Activated CD4-positive, alpha-beta memory T cell treated with anti-CD3 and anti-CD28 coated beads, Interleukin-2, amount 10 ng/mL, durations not matched to agents 7 days and 5 days (primary cell): ENCODE measurements at regions of chr17 and their contacts with region 1.

Region 1: GRCh38 chr17:34361478-34362061 is 1.5 kb downstream of the CCL1 start:
- DNase-seq: peak; percentile 80
- H3K4me3 Mint-ChIP-seq: no peak overlapping the region
- H3K27ac Mint-ChIP-seq: no peak overlapping the region
- H3K4me1 Mint-ChIP-seq: peaks cover 33% of the 10 kb centered on the region
- H3K27me3 Mint-ChIP-seq: peaks cover 52% of the 10 kb centered on the region

Region 2: GRCh38 chr17:34171245-34171818 is 190.2 kb before region 1 on chr17:
- CTCF ChIA-PET with region 1: interaction called, 41 read pairs
- POLR2A ChIA-PET with region 1: interaction called, 3 read pairs
- DNase-seq: peak; percentile 67
- H3K4me3 Mint-ChIP-seq: no peak overlapping the region
- H3K27ac Mint-ChIP-seq: no peak overlapping the region
- H3K4me1 Mint-ChIP-seq: no peaks in the 10 kb centered on the region
- H3K27me3 Mint-ChIP-seq: peaks cover 3% of the 10 kb centered on the region

Region 3: GRCh38 chr17:34321964-34322363 is 39.6 kb before region 1 on chr17:
- CTCF ChIA-PET with region 1: interaction called, 16 read pairs
- POLR2A ChIA-PET with region 1: no interaction called
- DNase-seq: no peak
- H3K4me3 Mint-ChIP-seq: no peak overlapping the region
- H3K27ac Mint-ChIP-seq: no peak overlapping the region
- H3K4me1 Mint-ChIP-seq: no peaks in the 10 kb centered on the region
- H3K27me3 Mint-ChIP-seq: peaks cover 29% of the 10 kb centered on the region

Region 4: GRCh38 chr17:34378664-34379101 is 17.1 kb after region 1 on chr17:
- CTCF ChIA-PET with region 1: interaction called, 64 read pairs
- POLR2A ChIA-PET with region 1: interaction called, 3 read pairs
- DNase-seq: peak; percentile 50
- H3K4me3 Mint-ChIP-seq: peak overlapping the region; percentile 44
- H3K27ac Mint-ChIP-seq: peak overlapping the region; percentile 68
- H3K4me1 Mint-ChIP-seq: peaks cover 63% of the 10 kb centered on the region
- H3K27me3 Mint-ChIP-seq: peaks cover 14% of the 10 kb centered on the region

Region 5: GRCh38 chr17:34398990-34399389 is 37.4 kb after region 1 on chr17:
- CTCF ChIA-PET with region 1: interaction called, 27 read pairs
- POLR2A ChIA-PET with region 1: no interaction called
- DNase-seq: no peak
- H3K4me3 Mint-ChIP-seq: no peak overlapping the region
- H3K27ac Mint-ChIP-seq: peak overlapping the region; percentile 44
- H3K4me1 Mint-ChIP-seq: peaks cover 42% of the 10 kb centered on the region
- H3K27me3 Mint-ChIP-seq: peaks cover 26% of the 10 kb centered on the region

Region 6: DNA sequence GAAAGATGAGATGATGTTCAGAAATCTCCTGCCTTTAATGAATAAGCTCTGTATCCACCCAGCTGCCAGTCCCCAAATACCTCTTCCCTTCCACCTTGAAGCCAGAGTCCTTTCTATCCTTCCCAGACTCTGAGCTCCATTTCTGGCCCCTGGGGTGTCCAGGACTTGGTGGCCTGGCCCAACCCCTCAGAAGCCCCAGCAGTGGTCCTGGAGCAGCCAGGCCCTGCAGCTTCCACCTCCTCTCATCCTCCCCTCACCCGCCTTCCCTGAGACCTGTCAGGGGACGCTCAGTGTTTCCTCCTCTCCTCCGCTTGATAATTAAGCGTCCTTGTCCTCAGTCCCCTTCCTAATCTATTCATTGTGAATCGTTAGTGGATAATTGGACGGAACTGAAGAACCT is 96.7 kb after region 1 on chr17:
- CTCF ChIA-PET with region 1: no interaction called
- POLR2A ChIA-PET with region 1: no interaction called
- DNase-seq: no peak
- H3K4me3 Mint-ChIP-seq: no peak overlapping the region
- H3K27ac Mint-ChIP-seq: no peak overlapping the region
- H3K4me1 Mint-ChIP-seq: no peaks in the 10 kb centered on the region
- H3K27me3 Mint-ChIP-seq: peaks cover 39% of the 10 kb centered on the region